IMR-90 (cell line): ENCODE measurements at regions of chr20 and their contacts with region 1.

Region 1: GRCh38 chr20:63056236-63056948 is 49.6 kb upstream of the BHLHE23 start:
- DNase-seq: no peak
- ATAC-seq: peak; percentile 88
- H3K4me3 ChIP-seq: no peak overlapping the region
- H3K27ac ChIP-seq: no peak overlapping the region
- H3K4me1 ChIP-seq: no peaks in the 10 kb centered on the region
- H3K27me3 ChIP-seq: peaks cover 32% of the 10 kb centered on the region
- CTCF ChIP-seq: peak; percentile 65
- POLR2A ChIP-seq: no peak
- RAD21 ChIP-seq: peak; percentile 47

Region 2: GRCh38 chr20:63183422-63184348 is 127.3 kb after region 1 on chr20:
- CTCF ChIA-PET with region 1: no interaction called
- POLR2A ChIA-PET with region 1: no interaction called
- dilution Hi-C with region 1: no loop called
- in situ Hi-C with region 1: no loop called
- intact Hi-C with region 1: loop called (anchors 10 kb)
- DNase-seq: no peak
- ATAC-seq: peak; percentile 65
- H3K4me3 ChIP-seq: no peak overlapping the region
- H3K27ac ChIP-seq: no peak overlapping the region
- H3K4me1 ChIP-seq: no peaks in the 10 kb centered on the region
- H3K27me3 ChIP-seq: peaks cover 37% of the 10 kb centered on the region; the same call in 1 of the 2 replicates
- CTCF ChIP-seq: peak; percentile 63
- POLR2A ChIP-seq: no peak
- RAD21 ChIP-seq: peak; percentile 66

Region 3: DNA sequence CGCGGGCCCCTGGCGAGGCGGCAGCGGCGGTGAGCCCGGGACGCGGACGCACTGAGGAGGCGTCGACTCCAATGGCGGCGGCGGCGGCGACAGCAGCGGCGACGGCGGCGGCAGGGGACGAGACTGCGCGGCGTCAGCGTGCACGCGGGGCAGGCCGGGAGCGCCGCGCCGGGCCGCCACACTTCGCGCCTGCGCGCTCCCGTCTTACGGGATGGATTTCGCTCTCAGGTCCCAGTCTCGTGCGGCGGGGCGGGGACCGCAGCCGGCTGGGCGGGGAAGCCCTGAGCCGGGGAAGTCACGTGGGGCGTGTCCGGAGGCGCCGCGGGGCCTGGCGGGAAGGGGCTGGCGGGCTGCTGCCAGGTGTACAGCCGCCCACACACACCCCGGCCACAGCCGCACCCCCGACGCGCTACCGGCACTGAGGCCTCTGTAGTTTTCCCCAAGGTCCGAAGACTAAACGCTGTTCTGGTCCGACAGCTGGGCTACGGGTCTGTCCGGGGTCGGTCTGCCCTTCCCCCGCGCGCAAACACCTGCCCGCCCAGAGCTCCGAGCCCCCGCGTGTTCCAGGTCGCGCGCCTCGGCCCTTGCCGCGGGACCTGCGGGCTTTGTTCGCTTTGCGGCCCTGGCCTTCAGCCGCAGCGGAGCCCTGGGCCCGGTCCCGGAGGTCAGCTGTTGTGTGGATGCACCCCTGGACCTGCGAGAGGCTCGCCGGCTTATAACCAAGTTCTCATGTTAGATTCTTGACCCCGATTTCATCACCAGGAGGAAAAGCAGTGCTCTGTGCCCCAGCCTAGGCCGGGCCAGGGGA is 159.9 kb after region 1 on chr20 and contains the start of gene YTHDF1:
- CTCF ChIA-PET with region 1: no interaction called
- POLR2A ChIA-PET with region 1: no interaction called
- dilution Hi-C with region 1: no loop called
- in situ Hi-C with region 1: no loop called
- intact Hi-C with region 1: loop called (anchors 1 kb)
- DNase-seq: peak; percentile 90
- ATAC-seq: peak; percentile 96
- H3K4me3 ChIP-seq: peak within 1 kb of the TSS; percentile 89
- H3K27ac ChIP-seq: peak within 1 kb of the TSS; percentile 79
- H3K4me1 ChIP-seq: peaks cover 6% of the 10 kb centered on the region
- H3K27me3 ChIP-seq: peaks cover 16% of the 10 kb centered on the region; the same call in 1 of the 2 replicates
- CTCF ChIP-seq: no peak
- POLR2A ChIP-seq: peak; percentile 61; the same call in 1 of the 2 replicates
- RAD21 ChIP-seq: no peak
- total RNA-seq, gene YTHDF1: 10.9 and 13.9 TPM in 2 replicates